Heart right ventricle (tissue), 16 donors: ENCODE measurements at regions of chr10 and their contacts with region 1.

Region 1: GRCh38 chr10:98414932-98415730 is at the start of gene PYROXD2:
- DNase-seq: peak; percentile 94
- ATAC-seq: peak; percentile 96 to 99 (median 98)
- H3K4me3 ChIP-seq: peak within 1 kb of the TSS; percentile 37 to 73 (median 64)
- H3K27ac ChIP-seq: peak within 1 kb of the TSS; percentile 60 to 92 (median 84)
- H3K4me1 ChIP-seq: peaks cover 16 to 48% (median 35%) of the 10 kb centered on the region in 9 donors
- H3K27me3 ChIP-seq: no peaks in the 10 kb centered on the region
- CTCF ChIP-seq: no peak
- total RNA-seq, gene PYROXD2: 9.0 to 18.8 (median 13.9) TPM

Region 2: GRCh38 chr10:98262571-98262970 is 152.6 kb before region 1 on chr10:
- intact Hi-C with region 1: loop called in 2 of 10 experiments (anchors 10 kb)
- DNase-seq: peak; percentile 60 to 74
- ATAC-seq: peak; percentile 47 to 83 (median 75)
- H3K4me3 ChIP-seq: no peak overlapping the region
- H3K27ac ChIP-seq: no peak overlapping the region
- H3K4me1 ChIP-seq: peaks cover 0 to 14% (median 8%) of the 10 kb centered on the region in 9 donors
- H3K27me3 ChIP-seq: peaks cover 0 to 16% (median 0%) of the 10 kb centered on the region in 7 donors
- CTCF ChIP-seq: peak; percentile 33 to 67 (median 62)

Region 3: GRCh38 chr10:98340261-98340939 is 74.7 kb before region 1 on chr10:
- intact Hi-C with region 1: loop called in 2 of 10 experiments (anchors 5 kb)
- DNase-seq: peak in 1 of 2 donors; percentile 34
- ATAC-seq: peak; percentile 40 to 87 (median 76)
- H3K4me3 ChIP-seq: no peak overlapping the region
- H3K27ac ChIP-seq: peak overlapping the region in 9 of 10 donors; percentile 30 to 71 (median 52)
- H3K4me1 ChIP-seq: peaks cover 0 to 39% (median 26%) of the 10 kb centered on the region in 9 donors
- H3K27me3 ChIP-seq: peaks cover 0 to 29% (median 4%) of the 10 kb centered on the region in 7 donors
- CTCF ChIP-seq: no peak

Region 4: DNA sequence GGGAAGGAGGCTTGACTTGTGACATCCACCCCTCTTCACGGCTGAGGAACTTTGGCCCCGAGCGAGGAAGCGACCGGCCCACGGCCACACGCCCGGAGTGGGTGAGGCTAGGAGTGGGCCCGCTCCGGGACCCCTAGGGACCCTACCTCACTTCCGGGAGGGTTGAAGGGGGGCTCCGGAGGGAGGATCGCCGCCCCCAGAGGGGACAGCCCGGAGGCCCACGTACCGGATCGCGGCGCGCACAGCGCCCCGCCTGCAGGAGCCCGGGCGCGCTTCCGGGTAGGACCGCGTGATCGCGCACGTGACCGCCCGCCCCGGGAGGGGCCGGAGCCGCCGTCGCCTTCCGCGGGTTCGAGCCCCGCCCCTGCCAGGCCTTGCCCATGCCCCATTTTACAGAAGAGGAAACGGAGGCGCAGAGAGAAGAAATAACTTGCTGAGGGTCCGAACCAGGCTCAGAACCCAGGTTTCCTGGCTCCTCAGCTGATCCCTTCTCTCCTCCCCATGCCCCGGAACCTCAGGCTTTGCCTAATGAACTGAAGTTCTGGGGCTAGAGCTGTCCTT is 31.6 kb after region 1 on chr10 and contains the start of gene HPS1:
- intact Hi-C with region 1: loop called in 1 of 10 experiments (anchors 1 kb)
- DNase-seq: peak; percentile 79 to 87
- ATAC-seq: peak; percentile 96 to 98 (median 97)
- H3K4me3 ChIP-seq: peak within 1 kb of the TSS; percentile 53 to 86 (median 70)
- H3K27ac ChIP-seq: peak within 1 kb of the TSS; percentile 70 to 93 (median 89)
- H3K4me1 ChIP-seq: peaks cover 0 to 23% (median 6%) of the 10 kb centered on the region in 9 donors
- H3K27me3 ChIP-seq: peaks cover 0 to 4% (median 0%) of the 10 kb centered on the region in 7 donors
- CTCF ChIP-seq: peak in 1 of 9 donors; percentile 30
- total RNA-seq, gene HPS1: 21.2 to 54.3 (median 33.4) TPM